Naive thymus-derived CD4-positive, alpha-beta T cell (primary cell): ENCODE measurements at regions of chr6 and their contacts with region 1.

Region 1: GRCh38 chr6:44265007-44265721 is at the start of gene NFKBIE:
- DNase-seq: peak; percentile 87 to 99 (median 93)
- ATAC-seq: peak; percentile 92
- H3K4me3 ChIP-seq: peak within 1 kb of the TSS; percentile 85
- H3K4me3 Mint-ChIP-seq: peak within 1 kb of the TSS; percentile 87 to 99 (median 94)
- H3K27ac ChIP-seq: peak within 1 kb of the TSS; percentile 97
- H3K27ac Mint-ChIP-seq: peak within 1 kb of the TSS; percentile 90 to 96 (median 92)
- H3K4me1 ChIP-seq: peaks cover 30% of the 10 kb centered on the region in 2 donors
- H3K4me1 Mint-ChIP-seq: peaks cover 32 to 57% (median 43%) of the 10 kb centered on the region in 7 donors
- H3K27me3 ChIP-seq: peaks cover 0 to 8% of the 10 kb centered on the region in 2 donors
- H3K27me3 Mint-ChIP-seq: peaks cover 15 to 22% (median 16%) of the 10 kb centered on the region in 5 donors
- total RNA-seq, gene NFKBIE: 8.3 to 53.4 (median 29.4) TPM

Region 2: GRCh38 chr6:44086931-44087574 is 178.1 kb before region 1 on chr6:
- CTCF ChIA-PET with region 1: no interaction called
- POLR2A ChIA-PET with region 1: no interaction called
- intact Hi-C with region 1: no loop called
- DNase-seq: no peak
- ATAC-seq: no peak
- H3K4me3 ChIP-seq: no peak overlapping the region
- H3K4me3 Mint-ChIP-seq: no peak overlapping the region
- H3K27ac ChIP-seq: no peak overlapping the region
- H3K27ac Mint-ChIP-seq: no peak overlapping the region
- H3K4me1 ChIP-seq: no peaks in the 10 kb centered on the region
- H3K4me1 Mint-ChIP-seq: peaks cover 0 to 3% (median 0%) of the 10 kb centered on the region in 7 donors
- H3K27me3 ChIP-seq: no peaks in the 10 kb centered on the region
- H3K27me3 Mint-ChIP-seq: no peaks in the 10 kb centered on the region

Region 3: GRCh38 chr6:44172731-44173500 is 92.2 kb before region 1 on chr6:
- CTCF ChIA-PET with region 1: no interaction called
- POLR2A ChIA-PET with region 1: no interaction called
- intact Hi-C with region 1: loop called in 1 of 2 experiments (anchors 1 kb)
- DNase-seq: peak; percentile 40 to 80 (median 62)
- ATAC-seq: peak; percentile 88
- H3K4me3 ChIP-seq: no peak overlapping the region
- H3K4me3 Mint-ChIP-seq: peak overlapping the region in 1 of 10 donors; percentile 60
- H3K27ac ChIP-seq: no peak overlapping the region
- H3K27ac Mint-ChIP-seq: no peak overlapping the region
- H3K4me1 ChIP-seq: no peaks in the 10 kb centered on the region
- H3K4me1 Mint-ChIP-seq: peaks cover 0 to 18% (median 13%) of the 10 kb centered on the region in 7 donors
- H3K27me3 ChIP-seq: no peaks in the 10 kb centered on the region
- H3K27me3 Mint-ChIP-seq: peaks cover 0 to 10% (median 4%) of the 10 kb centered on the region in 5 donors

Region 4: DNA sequence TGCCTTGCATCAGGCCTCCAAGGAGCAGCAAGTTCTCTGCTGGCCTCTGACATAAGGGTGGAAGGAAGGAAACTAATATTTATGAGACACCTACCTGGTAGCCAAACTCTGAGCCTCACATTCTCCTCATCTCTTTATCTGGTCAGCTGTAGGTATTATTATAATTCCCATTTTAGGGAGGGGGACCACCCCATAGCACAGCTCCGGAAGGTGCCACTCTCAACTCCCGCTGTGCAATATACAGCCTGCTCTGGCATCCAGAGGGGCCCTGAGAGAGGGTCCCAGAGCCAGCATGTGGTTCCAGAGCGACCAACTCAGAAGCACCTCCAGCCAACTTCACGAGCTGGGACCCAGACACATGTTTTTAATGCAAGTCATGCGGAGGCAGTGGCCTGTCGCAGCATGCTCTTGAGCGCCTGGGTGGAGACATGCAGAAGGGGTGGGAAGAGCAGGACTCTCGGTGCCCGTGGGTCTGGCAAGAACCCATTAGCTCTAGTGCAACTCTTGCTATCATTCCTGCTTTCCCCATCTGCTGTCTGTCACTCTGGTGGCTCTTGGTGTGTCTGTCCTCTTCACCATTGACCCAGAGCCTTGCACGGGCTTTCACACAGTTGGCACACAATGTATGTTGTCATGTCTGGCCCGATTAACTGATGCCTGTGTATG is 63.4 kb before region 1 on chr6:
- CTCF ChIA-PET with region 1: no interaction called
- POLR2A ChIA-PET with region 1: no interaction called
- intact Hi-C with region 1: no loop called
- DNase-seq: no peak
- ATAC-seq: no peak
- H3K4me3 ChIP-seq: no peak overlapping the region
- H3K4me3 Mint-ChIP-seq: no peak overlapping the region
- H3K27ac ChIP-seq: no peak overlapping the region
- H3K27ac Mint-ChIP-seq: no peak overlapping the region
- H3K4me1 ChIP-seq: no peaks in the 10 kb centered on the region
- H3K4me1 Mint-ChIP-seq: peaks cover 0 to 2% (median 0%) of the 10 kb centered on the region in 7 donors
- H3K27me3 ChIP-seq: no peaks in the 10 kb centered on the region
- H3K27me3 Mint-ChIP-seq: peaks cover 0 to 17% (median 5%) of the 10 kb centered on the region in 5 donors

Region 5: DNA sequence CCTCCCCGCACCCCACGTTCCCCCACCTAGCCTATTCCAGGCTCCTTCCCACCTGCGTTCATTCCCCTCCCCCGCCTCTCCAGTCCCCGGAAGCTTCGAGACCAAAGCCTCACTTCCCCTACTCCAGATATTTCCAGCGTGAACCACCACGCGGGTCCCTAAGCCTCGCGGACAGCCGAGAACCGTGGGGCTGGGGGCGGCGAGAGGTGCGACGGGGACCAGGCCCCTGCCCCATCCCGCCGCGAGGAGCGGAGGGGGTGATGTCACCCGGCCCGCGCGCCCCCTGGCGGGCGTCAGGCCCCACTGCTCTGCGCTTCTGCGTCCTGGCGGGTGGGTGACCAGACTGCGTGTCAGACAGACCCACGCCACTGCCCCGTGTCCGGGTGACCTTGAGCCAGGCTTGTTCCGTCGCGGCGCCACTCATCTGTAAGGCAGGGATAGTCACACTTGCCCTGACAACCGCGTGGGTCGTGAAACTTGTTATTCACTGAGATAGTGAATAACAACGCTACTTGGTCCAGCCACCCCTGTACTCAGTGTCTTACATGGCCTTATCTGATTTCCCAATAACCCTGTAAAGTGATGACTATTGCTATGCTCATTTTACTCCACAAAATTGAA is 27.2 kb before region 1 on chr6:
- CTCF ChIA-PET with region 1: interaction called, 3 read pairs
- POLR2A ChIA-PET with region 1: interaction called, 4 read pairs
- intact Hi-C with region 1: loop called in 1 of 2 experiments (anchors 2 kb)
- DNase-seq: peak; percentile 62 to 87 (median 80)
- ATAC-seq: peak; percentile 94
- H3K4me3 ChIP-seq: peak overlapping the region; percentile 93
- H3K4me3 Mint-ChIP-seq: peak overlapping the region; percentile 82 to 92 (median 90)
- H3K27ac ChIP-seq: peak overlapping the region; percentile 83
- H3K27ac Mint-ChIP-seq: peak overlapping the region; percentile 38 to 98 (median 89)
- H3K4me1 ChIP-seq: peaks cover 5 to 7% of the 10 kb centered on the region in 2 donors
- H3K4me1 Mint-ChIP-seq: peaks cover 0 to 28% (median 11%) of the 10 kb centered on the region in 7 donors
- H3K27me3 ChIP-seq: no peaks in the 10 kb centered on the region
- H3K27me3 Mint-ChIP-seq: no peaks in the 10 kb centered on the region

Region 6: DNA sequence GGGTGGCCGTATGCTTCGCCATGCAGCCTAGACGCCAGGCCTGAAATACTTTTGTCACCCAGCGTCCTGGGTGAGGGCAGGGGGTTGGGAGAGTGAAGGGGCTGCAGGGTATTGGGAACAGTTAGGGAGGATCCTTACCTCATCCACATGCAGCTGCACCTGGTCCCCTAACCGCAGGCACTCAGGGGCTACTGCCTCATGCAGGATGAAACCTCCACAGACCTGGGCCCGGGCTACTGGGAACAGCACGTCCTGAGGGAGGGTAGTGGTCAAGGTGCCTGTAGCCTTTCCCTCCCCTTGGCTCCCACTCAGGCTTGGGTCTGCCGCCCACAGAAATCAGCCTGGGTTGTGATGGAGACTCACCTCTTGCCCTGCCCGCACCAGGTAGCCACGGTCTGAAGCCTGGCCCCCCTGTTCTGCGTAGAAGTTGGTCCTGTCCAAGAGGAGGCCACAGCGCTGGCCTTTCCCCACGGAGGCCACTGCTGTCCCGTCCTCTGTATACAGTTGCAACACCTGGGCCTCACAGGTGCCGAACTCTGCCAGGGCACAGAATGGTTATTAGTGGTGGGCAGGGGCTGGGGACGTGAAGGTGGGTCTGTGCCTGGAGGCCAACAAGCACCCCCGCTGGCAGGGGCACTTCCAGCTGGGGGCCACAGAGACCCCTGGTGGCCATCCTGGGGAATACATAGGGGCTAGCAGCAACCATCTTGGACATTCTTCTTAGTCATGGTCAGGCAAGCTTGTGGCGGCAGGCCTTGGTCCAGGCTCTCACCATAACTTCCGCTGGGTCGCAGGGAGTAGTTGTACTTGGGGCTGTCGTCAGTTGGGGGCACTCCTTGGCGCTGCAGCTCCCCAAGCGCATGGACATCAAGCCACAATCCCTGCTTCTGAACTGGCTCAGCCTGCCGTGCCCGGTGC is 39.4 kb after region 1 on chr6:
- CTCF ChIA-PET with region 1: interaction called, 50 read pairs
- POLR2A ChIA-PET with region 1: interaction called, 5 read pairs
- intact Hi-C with region 1: loop called (anchors 1 kb)
- DNase-seq: peak in 7 of 9 donors; percentile 13 to 53 (median 27)
- ATAC-seq: peak; percentile 80
- H3K4me3 ChIP-seq: no peak overlapping the region
- H3K4me3 Mint-ChIP-seq: no peak overlapping the region
- H3K27ac ChIP-seq: no peak overlapping the region
- H3K27ac Mint-ChIP-seq: peak overlapping the region in 1 of 9 donors; percentile 38
- H3K4me1 ChIP-seq: no peaks in the 10 kb centered on the region
- H3K4me1 Mint-ChIP-seq: peaks cover 0 to 4% (median 0%) of the 10 kb centered on the region in 7 donors
- H3K27me3 ChIP-seq: no peaks in the 10 kb centered on the region
- H3K27me3 Mint-ChIP-seq: no peaks in the 10 kb centered on the region

Region 7: DNA sequence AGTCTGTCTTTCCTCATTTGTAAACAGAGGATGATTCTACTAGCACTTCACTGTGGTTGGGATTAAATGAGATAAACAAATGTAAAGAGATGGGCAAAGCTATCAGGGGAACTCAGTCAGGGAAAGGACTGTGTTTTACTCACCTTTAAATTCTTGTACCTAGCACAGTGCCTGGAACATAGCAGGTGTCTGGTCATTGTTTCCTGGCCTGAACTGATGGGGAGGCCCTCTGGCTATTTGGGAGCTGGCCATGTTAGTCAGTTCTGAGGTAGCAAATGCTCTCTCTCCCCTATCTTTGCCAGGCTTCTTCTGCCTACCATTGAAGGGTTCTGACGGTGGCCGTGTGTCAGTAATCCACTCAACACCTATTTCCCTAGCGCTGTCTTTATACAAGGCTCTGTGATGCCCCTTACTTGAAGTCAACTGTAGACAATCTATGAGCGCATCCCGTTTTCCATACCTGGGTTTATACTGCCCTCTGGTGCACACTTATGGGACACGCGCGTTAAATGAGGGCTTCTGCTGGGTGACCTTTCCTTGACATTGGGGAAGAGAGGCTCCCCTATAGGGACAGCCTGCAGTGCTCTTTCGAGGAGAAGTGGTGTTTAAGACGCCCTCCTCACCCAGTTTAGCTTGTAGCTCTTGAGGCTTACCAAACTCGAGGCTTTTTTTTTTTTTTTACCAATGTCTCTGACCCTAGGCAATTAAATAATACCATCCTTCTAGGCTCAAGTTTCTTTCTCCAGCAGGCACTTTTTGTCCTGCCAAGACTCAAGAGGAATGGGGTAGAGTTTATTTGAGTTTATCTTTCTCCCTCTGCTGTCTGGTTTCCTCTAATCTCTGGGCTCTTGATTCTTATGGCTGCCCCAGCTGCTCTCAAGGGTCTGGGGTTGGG is 73.3 kb after region 1 on chr6:
- CTCF ChIA-PET with region 1: interaction called, 31 read pairs
- POLR2A ChIA-PET with region 1: no interaction called
- intact Hi-C with region 1: loop called (anchors 1 kb)
- DNase-seq: peak; percentile 43 to 67 (median 62)
- ATAC-seq: peak; percentile 92
- H3K4me3 ChIP-seq: no peak overlapping the region
- H3K4me3 Mint-ChIP-seq: no peak overlapping the region
- H3K27ac ChIP-seq: no peak overlapping the region
- H3K27ac Mint-ChIP-seq: no peak overlapping the region
- H3K4me1 ChIP-seq: no peaks in the 10 kb centered on the region
- H3K4me1 Mint-ChIP-seq: peaks cover 0 to 4% (median 0%) of the 10 kb centered on the region in 7 donors
- H3K27me3 ChIP-seq: no peaks in the 10 kb centered on the region
- H3K27me3 Mint-ChIP-seq: peaks cover 18 to 33% (median 24%) of the 10 kb centered on the region in 5 donors

Region 8: GRCh38 chr6:44456070-44456965 is 191.2 kb after region 1 on chr6:
- CTCF ChIA-PET with region 1: no interaction called
- POLR2A ChIA-PET with region 1: no interaction called
- intact Hi-C with region 1: loop called (anchors 1 to 2 kb)
- DNase-seq: peak in 7 of 9 donors; percentile 15 to 45 (median 26)
- ATAC-seq: peak; percentile 80
- H3K4me3 ChIP-seq: no peak overlapping the region
- H3K4me3 Mint-ChIP-seq: no peak overlapping the region
- H3K27ac ChIP-seq: no peak overlapping the region
- H3K27ac Mint-ChIP-seq: peak overlapping the region in 1 of 9 donors; percentile 58
- H3K4me1 ChIP-seq: no peaks in the 10 kb centered on the region
- H3K4me1 Mint-ChIP-seq: peaks cover 0 to 8% (median 0%) of the 10 kb centered on the region in 7 donors
- H3K27me3 ChIP-seq: no peaks in the 10 kb centered on the region
- H3K27me3 Mint-ChIP-seq: peaks cover 0 to 9% (median 3%) of the 10 kb centered on the region in 5 donors